ENCODE measurements at regions of chr2 and their contacts with region 1.

Region 1: DNA sequence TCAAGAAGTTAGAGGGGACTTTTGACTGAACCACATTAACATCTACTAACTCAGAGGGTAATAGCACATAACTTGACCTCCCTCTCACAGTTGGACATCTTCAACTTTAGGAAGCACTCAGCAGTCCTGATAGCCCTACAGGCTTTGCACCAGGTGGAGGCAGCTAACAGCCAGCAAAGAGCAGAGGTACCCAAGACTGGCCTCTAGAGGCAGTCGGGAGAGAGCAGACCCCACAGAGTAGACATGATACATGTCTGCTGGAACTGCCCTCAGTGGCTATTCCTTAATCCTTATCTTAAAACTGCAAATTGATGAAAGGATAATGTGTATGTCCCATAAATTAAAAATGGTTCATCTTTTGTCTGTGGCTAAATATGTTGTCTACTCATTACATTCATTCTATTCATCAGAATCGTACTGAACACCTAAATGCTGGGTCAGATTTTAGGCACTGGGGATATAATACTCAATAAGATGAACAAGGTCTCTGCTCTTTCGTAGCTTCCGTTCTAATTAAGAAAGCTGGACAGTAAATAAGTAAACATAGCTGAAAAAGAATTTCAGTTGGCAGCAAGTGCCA is 49.8 kb downstream of the CAB39 start:
- DNase-seq: peak; percentile 46 to 53
- ATAC-seq: peak; percentile 100
- H3K4me3 ChIP-seq: no peak overlapping the region
- H3K27ac ChIP-seq: no peak overlapping the region
- H3K4me1 ChIP-seq: no peaks in the 10 kb centered on the region
- CTCF ChIP-seq: peak; percentile 37
- EP300 ChIP-seq: no peak
- POLR2A ChIP-seq: no peak
- RAD21 ChIP-seq: peak in 1 of 2 experiments; percentile 42; a peak in 2 of 5 replicates

Region 2: DNA sequence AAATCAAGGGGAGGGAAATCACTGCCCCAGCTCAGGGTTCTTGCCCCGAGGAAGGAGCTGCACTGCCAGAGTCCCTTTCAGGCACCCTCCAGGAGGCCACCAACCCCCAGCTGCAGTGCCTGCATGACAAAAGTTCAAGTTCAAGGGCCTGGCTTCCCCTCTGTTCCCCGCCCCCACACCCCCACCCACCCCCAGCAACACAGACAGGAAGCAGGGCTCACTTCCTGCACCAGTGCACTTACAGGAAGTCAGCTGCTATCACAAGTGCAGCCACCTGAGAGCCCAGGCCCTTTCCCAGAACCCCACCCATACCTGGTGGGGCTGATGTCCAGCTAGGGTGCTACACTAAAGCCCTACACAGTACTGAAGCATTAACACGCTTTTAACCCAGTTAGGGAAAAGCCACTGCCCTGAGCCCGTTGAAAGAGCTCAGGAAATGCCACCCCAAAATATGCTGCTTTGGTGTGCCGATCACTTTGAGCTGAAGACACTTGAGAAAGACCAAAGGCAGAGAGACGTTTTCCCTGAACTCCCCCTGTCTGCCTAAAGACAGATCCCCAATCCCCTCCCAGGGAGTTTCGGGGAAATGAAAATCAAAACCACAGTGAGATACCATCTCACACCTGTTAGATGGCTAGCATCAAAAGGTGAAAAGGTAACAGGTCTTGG is 159.7 kb before region 1 on chr2:
- CTCF ChIA-PET with region 1: no interaction called
- POLR2A ChIA-PET with region 1: no interaction called
- DNase-seq: no peak
- ATAC-seq: no peak
- H3K4me3 ChIP-seq: no peak overlapping the region
- H3K27ac ChIP-seq: no peak overlapping the region
- H3K4me1 ChIP-seq: no peaks in the 10 kb centered on the region
- CTCF ChIP-seq: no peak
- EP300 ChIP-seq: no peak
- POLR2A ChIP-seq: no peak
- RAD21 ChIP-seq: no peak

Region 3: GRCh38 chr2:230721712-230722111 is 40.7 kb before region 1 on chr2:
- CTCF ChIA-PET with region 1: no interaction called
- POLR2A ChIA-PET with region 1: no interaction called
- DNase-seq: no peak
- ATAC-seq: no peak
- H3K4me3 ChIP-seq: no peak overlapping the region
- H3K27ac ChIP-seq: no peak overlapping the region
- H3K4me1 ChIP-seq: no peaks in the 10 kb centered on the region
- CTCF ChIP-seq: no peak
- EP300 ChIP-seq: no peak
- POLR2A ChIP-seq: no peak
- RAD21 ChIP-seq: no peak

Region 4: GRCh38 chr2:230738391-230738811 is 24.0 kb before region 1 on chr2:
- CTCF ChIA-PET with region 1: interaction called, 10 read pairs
- POLR2A ChIA-PET with region 1: no interaction called
- DNase-seq: no peak
- ATAC-seq: peak; percentile 43 to 63; a peak in 4 of 6 replicates
- H3K4me3 ChIP-seq: no peak overlapping the region
- H3K27ac ChIP-seq: peak overlapping the region in 1 of 2 experiments; percentile 3; a peak in 1 of 6 replicates
- H3K4me1 ChIP-seq: peaks cover 24% of the 10 kb centered on the region
- CTCF ChIP-seq: no peak
- EP300 ChIP-seq: no peak
- POLR2A ChIP-seq: no peak
- RAD21 ChIP-seq: no peak

Region 5: DNA sequence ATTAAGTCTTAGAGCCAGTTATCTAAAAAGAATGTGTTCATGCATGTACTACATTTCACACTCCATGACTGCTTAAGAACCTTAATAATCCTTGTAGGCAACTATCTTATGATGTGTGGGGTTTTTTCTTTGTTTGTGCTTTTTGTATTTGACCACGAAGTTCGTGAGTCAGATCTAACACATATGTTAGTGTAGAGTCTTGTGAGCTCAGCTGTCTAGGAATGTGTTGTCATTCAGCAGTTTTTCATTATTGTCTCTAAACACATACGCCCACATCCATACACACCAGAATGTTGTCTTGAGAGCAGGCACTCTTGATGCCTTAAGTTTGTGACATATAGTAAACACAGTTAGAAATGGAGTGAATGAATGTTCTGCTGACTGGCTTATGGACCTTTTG is 11.3 kb before region 1 on chr2:
- CTCF ChIA-PET with region 1: no interaction called
- POLR2A ChIA-PET with region 1: no interaction called
- DNase-seq: no peak
- ATAC-seq: no peak
- H3K4me3 ChIP-seq: no peak overlapping the region
- H3K27ac ChIP-seq: no peak overlapping the region
- H3K4me1 ChIP-seq: peaks cover 5% of the 10 kb centered on the region; the same call in 2 of the 3 replicates
- CTCF ChIP-seq: no peak
- EP300 ChIP-seq: no peak
- POLR2A ChIP-seq: no peak
- RAD21 ChIP-seq: no peak

Region 6: DNA sequence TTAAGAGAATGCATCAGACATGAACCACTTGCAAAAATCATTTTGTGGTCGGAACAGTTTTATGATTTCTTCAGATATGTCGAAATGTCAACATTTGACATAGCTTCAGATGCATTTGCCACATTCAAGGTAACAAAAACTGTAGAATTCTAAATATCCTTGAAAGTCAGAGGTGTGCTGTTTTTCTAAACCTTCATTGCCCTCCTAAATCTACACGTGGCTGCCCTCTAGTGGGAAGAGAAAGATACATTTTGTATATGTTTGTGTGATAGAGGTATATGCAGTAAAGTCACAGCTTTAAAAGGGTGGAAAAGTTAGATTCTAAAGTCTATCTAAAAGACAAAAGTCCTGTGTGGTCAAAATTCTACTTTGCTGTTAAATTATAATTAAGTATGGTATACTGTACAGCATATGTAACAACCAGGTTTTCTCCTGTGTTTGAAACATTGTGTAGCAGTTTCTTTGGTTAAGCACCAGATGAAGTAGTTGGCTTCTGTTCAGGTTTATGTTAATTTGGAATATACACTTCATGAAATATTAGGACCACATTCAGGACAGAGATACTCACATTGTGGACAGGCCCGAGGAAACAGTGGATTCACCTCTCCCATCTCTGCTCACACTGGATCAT is 36.5 kb after region 1 on chr2:
- CTCF ChIA-PET with region 1: interaction called, 14 read pairs
- POLR2A ChIA-PET with region 1: no interaction called
- DNase-seq: peak; percentile 22 to 45
- ATAC-seq: peak in 1 of 2 experiments; percentile 82; a peak in 4 of 6 replicates
- H3K4me3 ChIP-seq: no peak overlapping the region
- H3K27ac ChIP-seq: no peak overlapping the region
- H3K4me1 ChIP-seq: peaks cover 7% of the 10 kb centered on the region
- CTCF ChIP-seq: peak; percentile 84
- EP300 ChIP-seq: no peak
- POLR2A ChIP-seq: no peak
- RAD21 ChIP-seq: peak; percentile 80 to 87

Measured in A549 (cell line).